MCF 10A (cell line): ENCODE measurements at regions of chr18 and their contacts with region 1.

Region 1: DNA sequence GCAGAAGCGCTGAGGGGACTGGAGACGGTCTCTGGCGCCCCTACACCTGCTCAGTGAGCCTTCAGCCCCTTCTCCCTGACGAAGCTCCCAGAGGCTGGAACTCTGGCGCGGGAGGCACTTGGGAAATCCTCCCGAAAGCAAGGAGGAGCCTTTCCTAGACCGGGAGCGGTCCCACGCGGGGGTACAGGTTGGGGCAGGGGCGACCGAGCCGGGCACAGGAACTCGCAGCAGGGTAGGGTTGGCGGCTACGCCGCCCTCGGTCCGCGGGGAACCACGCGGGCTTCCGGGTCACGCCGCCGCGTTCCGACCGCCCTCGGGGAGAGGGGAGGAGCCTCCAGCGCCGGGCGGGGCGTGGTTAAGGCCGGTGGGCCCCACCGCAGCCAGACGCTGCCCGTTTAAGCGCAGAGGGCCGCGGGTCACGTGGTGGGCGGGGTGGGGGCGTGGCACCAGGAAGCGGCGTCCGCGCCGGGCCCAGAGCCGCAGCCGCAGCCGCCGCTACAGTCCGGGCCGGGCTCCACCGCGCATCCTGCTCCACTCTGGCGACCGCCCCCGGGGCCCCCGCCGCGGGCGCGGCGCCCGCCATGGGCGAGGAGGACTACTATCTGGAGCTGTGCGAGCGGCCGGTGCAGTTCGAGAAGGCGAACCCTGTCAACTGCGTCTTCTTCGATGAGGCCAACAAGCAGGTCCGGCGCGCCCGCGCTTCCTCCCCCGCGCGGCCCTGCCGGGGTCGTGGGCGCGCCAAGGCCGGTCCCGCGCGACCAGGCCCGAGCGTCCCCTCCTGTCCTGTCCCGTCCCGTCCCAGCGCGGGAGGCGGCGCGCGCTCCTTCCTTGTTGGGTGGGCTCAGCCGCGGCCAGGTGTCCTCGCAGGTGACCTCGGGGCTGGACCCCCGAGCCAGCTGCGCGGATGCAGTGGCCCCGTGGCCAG is at the start of gene RMC1:
- DNase-seq: peak; percentile 91
- H3K4me3 Mint-ChIP-seq: peak within 1 kb of the TSS; percentile 81
- H3K27ac Mint-ChIP-seq: peak within 1 kb of the TSS; percentile 92
- H3K4me1 Mint-ChIP-seq: peaks cover 12% of the 10 kb centered on the region
- H3K27me3 Mint-ChIP-seq: no peaks in the 10 kb centered on the region
- CTCF ChIP-seq: no peak
- total RNA-seq, gene RMC1: 24.7 and 28.0 TPM in 2 replicates

Region 2: GRCh38 chr18:22703883-22704585 is 799.3 kb before region 1 on chr18:
- CTCF ChIA-PET with region 1: no interaction called
- POLR2A ChIA-PET with region 1: no interaction called
- intact Hi-C with region 1: no loop called
- DNase-seq: peak; percentile 76
- H3K4me3 Mint-ChIP-seq: no peak overlapping the region
- H3K27ac Mint-ChIP-seq: no peak overlapping the region
- H3K4me1 Mint-ChIP-seq: no peaks in the 10 kb centered on the region
- H3K27me3 Mint-ChIP-seq: no peaks in the 10 kb centered on the region
- CTCF ChIP-seq: peak; percentile 74

Region 3: GRCh38 chr18:23487738-23488570 is 15.3 kb before region 1 on chr18:
- CTCF ChIA-PET with region 1: interaction called, 12 read pairs
- POLR2A ChIA-PET with region 1: interaction called, 12 read pairs
- intact Hi-C with region 1: no loop called
- DNase-seq: no peak
- H3K4me3 Mint-ChIP-seq: no peak overlapping the region
- H3K27ac Mint-ChIP-seq: no peak overlapping the region
- H3K4me1 Mint-ChIP-seq: peaks cover 17% of the 10 kb centered on the region
- H3K27me3 Mint-ChIP-seq: no peaks in the 10 kb centered on the region
- CTCF ChIP-seq: no peak

Region 4: DNA sequence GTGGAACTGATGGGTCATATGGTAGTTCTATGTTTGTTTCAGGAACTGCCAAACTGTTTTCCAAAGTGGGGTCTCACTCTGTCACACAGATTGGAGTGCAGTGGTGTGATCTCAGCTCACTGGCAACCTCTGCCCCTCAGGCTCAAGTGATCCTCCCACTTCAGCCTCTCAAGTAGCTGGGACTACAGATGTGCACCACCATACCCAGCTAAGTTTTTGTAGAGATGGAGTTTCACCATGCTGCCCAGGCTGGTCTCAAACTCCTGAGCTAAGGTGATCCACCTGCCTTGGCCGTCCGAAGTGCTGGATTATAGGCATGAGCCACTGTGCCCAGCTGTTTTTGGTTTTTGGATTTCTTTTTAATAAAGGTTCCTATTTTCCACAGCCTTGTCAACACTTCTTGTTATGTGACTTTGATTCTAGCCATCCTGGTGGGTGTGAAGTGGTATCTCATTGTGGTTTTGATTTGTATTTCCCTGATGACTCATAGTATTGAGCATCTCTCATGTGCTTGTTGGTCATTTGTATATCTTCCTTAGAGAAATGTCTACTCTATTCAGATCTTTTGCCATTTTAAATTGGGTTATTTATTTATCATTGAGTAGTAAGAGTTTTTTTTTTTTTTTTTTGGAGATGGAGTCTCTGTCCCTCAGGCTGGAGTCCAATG is 60.2 kb after region 1 on chr18:
- CTCF ChIA-PET with region 1: no interaction called
- POLR2A ChIA-PET with region 1: no interaction called
- intact Hi-C with region 1: no loop called
- DNase-seq: peak; percentile 9
- H3K4me3 Mint-ChIP-seq: no peak overlapping the region
- H3K27ac Mint-ChIP-seq: no peak overlapping the region
- H3K4me1 Mint-ChIP-seq: peaks cover 12% of the 10 kb centered on the region
- H3K27me3 Mint-ChIP-seq: no peaks in the 10 kb centered on the region
- CTCF ChIP-seq: no peak

Region 5: DNA sequence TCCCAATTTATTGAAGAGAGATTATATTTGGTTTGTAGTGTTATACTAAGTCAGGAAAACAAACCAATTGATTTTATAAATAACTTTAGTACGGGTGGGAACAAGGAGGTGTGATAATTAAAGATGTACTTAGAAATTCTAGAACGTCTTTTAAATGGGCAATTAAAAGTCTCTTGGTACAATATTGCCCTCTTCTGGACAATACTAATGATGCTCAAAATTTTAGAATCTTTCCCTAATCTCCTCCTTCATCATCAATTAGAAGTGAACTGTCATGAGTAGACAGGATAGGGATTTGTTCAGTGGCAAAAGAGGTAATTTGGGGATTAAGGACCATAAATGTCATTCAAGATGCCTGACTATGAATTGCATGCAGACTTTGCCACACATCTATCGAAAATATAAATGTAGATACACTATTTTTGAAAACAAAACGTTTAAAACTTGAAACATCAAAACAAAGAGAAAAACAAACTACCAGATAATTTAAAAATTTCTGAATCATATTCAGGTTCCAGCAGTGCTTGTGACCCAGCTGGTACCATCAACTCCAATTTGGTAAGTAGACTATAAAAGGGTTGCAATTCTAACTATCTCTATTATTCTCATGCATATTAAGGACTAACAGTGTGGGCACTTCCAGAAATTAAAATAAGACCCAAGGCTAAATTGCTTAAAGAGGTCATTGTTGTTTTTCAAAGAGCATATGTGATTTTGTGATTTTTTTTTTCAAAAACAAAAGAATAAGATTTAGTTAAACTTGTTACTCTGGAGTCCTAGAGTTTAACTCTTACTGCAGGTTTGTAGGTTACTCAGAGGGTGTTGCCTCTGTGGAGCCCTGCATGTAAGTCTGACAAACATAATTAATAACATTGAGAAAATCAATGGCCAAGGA is 309.5 kb after region 1 on chr18:
- CTCF ChIA-PET with region 1: no interaction called
- POLR2A ChIA-PET with region 1: no interaction called
- intact Hi-C with region 1: loop called (anchors 2 kb)
- DNase-seq: peak; percentile 35
- H3K4me3 Mint-ChIP-seq: no peak overlapping the region
- H3K27ac Mint-ChIP-seq: no peak overlapping the region
- H3K4me1 Mint-ChIP-seq: no peaks in the 10 kb centered on the region
- H3K27me3 Mint-ChIP-seq: no peaks in the 10 kb centered on the region
- CTCF ChIP-seq: peak; percentile 59